Activated T-helper 2 cell treated with anti-CD3 and anti-CD28 coated beads, Interferon-gamma antibody, Interleukin-2, Interleukin-4, amounts not matched to agents 10 μg/mL and 5 μg/mL and 100 μg/mL, durations not matched to agents 14 hours and 24 hours and 36 hours (primary cell): ENCODE measurements at regions of chr6 and their contacts with region 1.

Region 1: GRCh38 chr6:143232849-143233248 is 172.2 kb downstream of the AIG1 start:
- DNase-seq: no peak
- H3K4me3 Mint-ChIP-seq: no peak overlapping the region
- H3K27ac Mint-ChIP-seq: no peak overlapping the region
- H3K4me1 Mint-ChIP-seq: no peaks in the 10 kb centered on the region
- H3K27me3 Mint-ChIP-seq: no peaks in the 10 kb centered on the region

Region 2: DNA sequence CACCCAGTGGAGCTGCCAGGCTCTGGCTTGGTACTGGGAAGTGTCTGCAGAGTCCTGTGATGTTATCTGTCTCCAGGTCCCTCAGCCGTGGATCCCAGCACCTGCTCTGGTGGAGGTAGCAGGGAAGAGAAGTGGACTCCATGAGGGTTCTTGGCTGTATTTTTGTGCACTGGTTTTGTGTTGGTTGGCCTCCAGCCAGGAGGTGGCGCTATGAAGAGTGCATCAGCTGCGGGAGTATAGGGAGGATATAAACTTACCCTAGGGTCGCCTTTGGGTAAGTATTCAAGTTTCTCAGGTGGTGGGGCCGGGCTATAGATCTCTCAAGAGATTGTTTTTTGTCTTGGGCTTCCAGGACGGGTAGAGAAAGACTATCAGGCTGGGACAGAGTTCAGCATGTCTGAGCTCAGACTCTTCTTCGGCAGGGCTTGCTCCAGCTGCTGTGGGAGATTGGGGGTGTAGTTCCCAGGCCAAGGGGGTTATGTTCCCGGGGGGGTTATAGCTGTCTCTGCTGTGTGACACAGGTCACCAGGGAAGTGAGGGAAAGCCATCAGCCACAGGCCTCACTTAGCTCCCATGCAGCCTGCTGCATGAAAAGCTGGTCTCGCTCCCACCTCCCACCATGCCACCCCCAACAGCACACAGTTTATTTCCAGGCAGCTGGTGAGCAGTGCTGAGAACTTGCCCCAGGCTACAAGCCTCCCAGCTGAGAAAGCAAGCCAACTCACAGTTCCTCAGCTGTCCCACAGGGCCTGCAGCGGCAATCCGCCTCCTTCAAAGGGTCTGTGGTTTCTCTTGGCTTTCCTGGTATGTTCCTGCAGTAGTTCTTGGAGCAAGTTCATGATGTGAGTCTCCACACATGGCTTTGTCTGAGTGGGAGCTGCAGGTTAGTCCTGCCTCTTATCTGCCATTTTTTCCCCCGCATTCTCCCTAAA is 56.5 kb before region 1 on chr6:
- intact Hi-C with region 1: no loop called
- DNase-seq: no peak
- H3K4me3 Mint-ChIP-seq: no peak overlapping the region
- H3K27ac Mint-ChIP-seq: no peak overlapping the region
- H3K4me1 Mint-ChIP-seq: no peaks in the 10 kb centered on the region
- H3K27me3 Mint-ChIP-seq: no peaks in the 10 kb centered on the region

Region 3: GRCh38 chr6:143337201-143337949 is 104.5 kb after region 1 on chr6:
- intact Hi-C with region 1: loop called (anchors 10 kb)
- DNase-seq: peak; percentile 24
- H3K4me3 Mint-ChIP-seq: no peak overlapping the region
- H3K27ac Mint-ChIP-seq: no peak overlapping the region
- H3K4me1 Mint-ChIP-seq: peaks cover 9% of the 10 kb centered on the region
- H3K27me3 Mint-ChIP-seq: no peaks in the 10 kb centered on the region